Dendritic cell treated with granulocyte-macrophage colony-stimulating factor and Interleukin-4, amounts not matched to agents 40 ng/mL and 50 ng/mL, for 4 days (primary cell): ENCODE measurements at regions of chr14 and their contacts with region 1.

Region 1: DNA sequence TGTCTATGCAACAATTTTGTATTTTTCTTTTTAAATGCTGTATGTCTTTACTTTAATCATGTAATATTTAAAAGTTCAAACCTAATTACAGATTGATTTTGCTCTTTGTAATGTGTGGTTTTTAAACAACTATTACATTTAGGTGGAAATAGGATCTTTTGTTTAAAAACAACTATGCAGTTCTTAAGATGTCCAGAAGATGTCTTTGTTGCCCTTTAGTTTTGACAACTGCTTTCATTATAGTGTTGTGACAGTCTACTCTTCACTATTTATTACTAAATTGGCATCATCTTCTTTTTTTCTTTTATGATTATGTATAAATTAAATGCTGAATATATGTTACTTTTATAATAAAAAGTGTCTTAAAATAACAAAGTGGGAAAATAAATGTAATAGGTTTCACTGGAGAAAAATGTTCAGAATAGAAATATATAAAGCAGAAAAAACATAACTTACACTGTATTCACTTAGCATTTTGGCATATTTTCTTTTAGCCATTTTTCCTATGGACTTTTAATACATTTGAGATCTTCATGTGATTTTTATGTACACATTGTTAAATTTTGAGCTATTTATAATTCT is 27.1 kb upstream of the PCNX4 start:
- H3K4me3 Mint-ChIP-seq: no peak overlapping the region
- H3K27ac Mint-ChIP-seq: no peak overlapping the region
- H3K4me1 Mint-ChIP-seq: no peaks in the 10 kb centered on the region
- H3K27me3 Mint-ChIP-seq: peaks cover 3% of the 10 kb centered on the region

Region 2: GRCh38 chr14:59964251-59965007 is 100.2 kb before region 1 on chr14:
- intact Hi-C with region 1: loop called (anchors 5 kb)
- H3K4me3 Mint-ChIP-seq: no peak overlapping the region
- H3K27ac Mint-ChIP-seq: no peak overlapping the region
- H3K4me1 Mint-ChIP-seq: peaks cover 12% of the 10 kb centered on the region
- H3K27me3 Mint-ChIP-seq: peaks cover 8% of the 10 kb centered on the region

Region 3: DNA sequence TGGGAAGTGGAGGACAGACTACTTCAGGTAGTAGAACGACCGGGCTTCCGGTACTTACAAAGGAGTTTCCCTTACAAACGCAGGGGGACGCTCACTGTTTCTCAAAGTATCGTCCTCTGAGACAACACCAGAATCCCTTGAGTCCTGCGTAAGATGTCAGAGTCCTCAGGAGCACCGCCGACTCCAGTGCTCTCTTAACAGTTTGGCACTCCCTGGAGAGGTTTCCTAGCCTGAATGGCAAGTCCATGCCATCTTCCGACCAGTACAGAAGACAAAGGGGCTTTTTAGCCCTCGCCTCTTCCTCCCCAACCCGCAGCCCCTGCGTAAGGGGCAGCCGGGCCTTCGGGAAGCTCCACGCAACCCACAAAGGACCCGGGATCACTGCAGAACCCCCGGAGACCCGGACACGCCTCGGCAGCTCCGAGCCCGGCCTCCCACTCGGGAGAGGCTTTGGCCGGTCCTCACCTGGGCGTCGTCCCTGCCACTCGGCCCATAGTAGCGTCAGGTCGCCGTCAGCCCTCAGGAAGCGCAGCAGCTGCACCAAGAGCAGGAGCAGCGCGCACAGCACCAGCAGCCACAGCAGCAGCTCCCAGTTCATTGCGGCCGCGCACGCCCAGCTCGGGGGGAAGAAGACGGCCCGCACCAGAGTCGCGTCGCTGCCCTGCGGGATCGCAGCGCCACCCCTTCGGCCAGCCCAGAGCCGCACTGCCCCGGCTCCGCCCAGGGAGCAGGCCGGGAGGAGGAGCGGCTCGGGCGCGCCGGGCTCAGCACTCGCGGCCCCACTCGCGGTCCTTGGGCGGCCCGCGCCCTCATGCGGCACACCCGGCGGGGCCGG is 100.3 kb after region 1 on chr14 and contains the start of gene DHRS7:
- intact Hi-C with region 1: loop called (anchors 1 kb)
- H3K4me3 Mint-ChIP-seq: peak within 1 kb of the TSS; percentile 95
- H3K27ac Mint-ChIP-seq: peak within 1 kb of the TSS; percentile 95
- H3K4me1 Mint-ChIP-seq: peaks cover 13% of the 10 kb centered on the region
- H3K27me3 Mint-ChIP-seq: no peaks in the 10 kb centered on the region

Region 4: DNA sequence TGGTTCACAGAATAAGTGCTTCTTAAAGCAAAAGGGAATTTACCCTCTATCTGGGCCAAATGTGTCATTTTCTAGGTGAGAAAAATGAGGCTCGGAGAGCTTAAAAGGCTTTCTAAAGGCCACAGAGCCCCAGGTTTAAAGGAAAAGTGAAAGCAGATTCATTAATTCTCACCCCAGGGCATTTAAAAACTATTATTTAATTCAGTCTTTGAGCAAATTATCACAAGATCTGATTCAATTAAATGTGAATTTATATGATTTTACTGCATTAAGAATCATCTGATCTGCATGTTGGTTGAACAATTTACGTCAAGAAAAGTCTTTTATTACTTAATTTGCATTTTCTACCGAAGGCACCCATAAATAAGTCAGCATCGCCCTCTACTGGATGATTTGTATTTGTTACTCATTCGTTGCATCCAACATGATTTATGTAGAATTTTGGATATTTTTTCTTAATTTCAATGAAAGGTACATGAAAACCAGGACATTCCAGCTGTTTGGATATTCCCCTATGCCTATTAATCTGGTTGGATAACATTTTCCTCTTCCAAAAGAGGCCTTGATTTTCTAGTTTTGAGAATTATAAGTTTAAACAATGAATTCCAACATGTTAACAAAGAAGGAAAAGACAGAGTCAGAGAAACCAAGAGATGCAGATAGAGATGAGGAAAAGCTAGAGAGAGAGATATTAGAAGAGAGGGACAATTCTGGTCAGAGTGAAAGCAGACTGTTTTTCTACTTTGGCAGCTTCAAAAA is 119.7 kb after region 1 on chr14:
- intact Hi-C with region 1: loop called (anchors 1 kb)
- H3K4me3 Mint-ChIP-seq: peak overlapping the region; percentile 44
- H3K27ac Mint-ChIP-seq: no peak overlapping the region
- H3K4me1 Mint-ChIP-seq: peaks cover 6% of the 10 kb centered on the region
- H3K27me3 Mint-ChIP-seq: no peaks in the 10 kb centered on the region